Colonic mucosa (tissue), 4 donors: ENCODE measurements at regions of chr7 and their contacts with region 1.

Region 1: DNA sequence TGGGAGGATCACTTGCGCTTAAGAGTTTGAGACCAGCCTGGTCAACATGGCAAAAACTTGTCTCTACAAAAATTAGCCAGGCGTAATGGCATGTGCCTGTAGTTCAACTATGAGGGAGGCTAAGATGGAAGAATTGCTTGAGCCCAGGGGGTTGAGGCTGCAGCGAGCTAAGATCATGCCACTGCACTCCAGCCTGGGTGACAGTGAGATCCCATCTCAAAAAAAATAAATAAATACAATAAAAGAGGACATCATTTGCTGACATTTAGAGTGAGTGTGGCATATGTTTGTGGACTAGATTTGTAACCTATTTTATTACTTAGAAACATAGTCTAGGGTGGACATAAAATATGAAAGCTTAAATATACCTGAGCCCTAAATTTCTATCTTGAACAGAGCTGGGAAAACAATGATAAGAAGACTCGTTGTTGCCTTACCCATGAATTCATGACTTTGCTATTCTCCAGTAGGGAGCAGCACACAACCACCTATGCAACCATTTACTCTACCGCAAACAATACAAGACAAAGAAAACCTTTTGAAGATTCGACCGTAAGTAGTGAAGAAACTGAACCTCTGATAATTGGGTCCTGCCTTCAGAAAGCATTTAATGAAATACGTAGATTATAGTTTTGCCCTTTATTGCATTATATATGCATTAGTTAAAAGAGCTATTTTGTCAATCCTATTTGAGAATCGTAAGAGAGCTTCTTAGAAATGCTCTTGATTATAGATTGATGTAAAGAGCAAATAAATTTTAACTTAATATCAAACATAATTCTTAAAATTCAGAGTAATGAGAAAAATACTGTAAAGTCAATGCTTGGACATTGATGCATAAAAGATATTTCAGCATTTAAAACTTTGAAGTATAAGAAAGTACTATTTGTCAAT is 83.5 kb downstream of the GNAT3 start:
- DNase-seq: peak; percentile 24
- H3K4me3 ChIP-seq: no peak overlapping the region
- H3K27ac ChIP-seq: no peak overlapping the region
- H3K4me1 ChIP-seq: no peaks in the 10 kb centered on the region
- H3K27me3 ChIP-seq: no peaks in the 10 kb centered on the region
- CTCF ChIP-seq: no peak

Region 2: GRCh38 chr7:80659120-80660055 is 231.0 kb after region 1 on chr7:
- intact Hi-C with region 1: loop called (anchors 5 kb)
- DNase-seq: no peak
- H3K4me3 ChIP-seq: no peak overlapping the region
- H3K27ac ChIP-seq: no peak overlapping the region
- H3K4me1 ChIP-seq: no peaks in the 10 kb centered on the region
- H3K27me3 ChIP-seq: no peaks in the 10 kb centered on the region
- CTCF ChIP-seq: peak; percentile 52